ENCODE measurements at regions of chr17 and their contacts with region 1.

Region 1: DNA sequence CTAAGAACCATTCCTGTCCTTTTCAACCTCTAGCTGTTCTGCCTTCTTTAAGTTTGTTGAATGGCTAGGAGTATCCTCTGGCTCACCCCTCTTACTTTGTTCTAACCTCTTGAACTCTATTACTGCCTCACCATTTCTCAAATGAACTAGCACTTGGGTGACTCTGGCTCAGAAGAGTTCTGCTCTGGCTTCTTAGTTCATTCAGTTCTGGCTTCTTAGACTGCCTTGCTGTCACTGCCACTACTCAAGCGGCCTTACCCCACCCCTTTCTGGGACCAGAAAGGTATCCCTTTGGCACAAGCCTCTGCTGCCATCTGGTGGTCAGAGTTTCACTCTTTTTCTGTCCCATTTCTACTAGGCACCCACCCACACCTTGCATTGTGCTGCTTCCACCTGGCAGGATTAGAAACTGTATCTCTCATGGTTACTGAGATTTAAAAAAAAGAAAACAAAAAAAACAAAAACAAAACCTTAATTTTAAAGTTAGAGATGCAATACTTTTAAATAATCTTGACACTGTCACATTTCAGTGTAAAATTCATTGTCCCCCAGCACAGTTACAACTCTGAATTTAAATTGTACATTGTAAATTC is 6.8 kb upstream of the ABCA10 start:
- DNase-seq: peak; percentile 21 to 71 (median 57)
- ATAC-seq: peak; percentile 72
- H3K4me3 ChIP-seq: no peak overlapping the region
- H3K4me3 Mint-ChIP-seq: no peak overlapping the region
- H3K27ac ChIP-seq: no peak overlapping the region
- H3K27ac Mint-ChIP-seq: no peak overlapping the region
- H3K4me1 ChIP-seq: no peaks in the 10 kb centered on the region
- H3K4me1 Mint-ChIP-seq: no peaks in the 10 kb centered on the region
- H3K27me3 ChIP-seq: no peaks in the 10 kb centered on the region
- H3K27me3 Mint-ChIP-seq: no peaks in the 10 kb centered on the region
- CTCF ChIP-seq: peak; percentile 49

Region 2: DNA sequence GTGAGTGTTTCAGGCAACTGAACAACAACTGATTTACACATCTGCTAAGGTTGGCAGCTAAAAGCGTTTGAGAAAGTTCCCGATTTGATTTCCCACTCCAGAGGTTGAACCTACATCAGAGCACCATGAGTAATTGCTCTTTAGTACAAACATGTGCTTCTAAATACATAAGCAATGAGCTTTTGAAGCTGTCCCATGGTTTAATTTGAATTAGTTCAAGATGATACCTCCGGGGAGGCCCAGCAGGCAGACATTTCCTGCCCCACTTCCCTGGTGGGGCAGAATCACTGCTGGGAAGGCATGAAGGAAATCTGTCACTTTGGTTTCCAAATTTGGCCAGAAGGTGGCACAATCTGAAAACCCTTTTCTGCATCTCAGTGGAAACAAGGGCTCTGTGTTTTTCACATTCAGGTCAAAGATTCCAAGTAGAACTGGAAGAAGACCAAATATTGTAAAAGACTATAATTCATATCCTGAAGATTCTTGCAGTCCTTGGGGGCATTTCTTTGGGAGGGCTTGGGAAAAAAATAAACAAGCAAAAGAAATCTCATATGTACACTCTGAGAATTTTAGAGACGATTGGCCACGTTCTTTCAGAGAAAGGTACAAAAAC is 458.1 kb before region 1 on chr17:
- CTCF ChIA-PET with region 1: interaction called, 5 read pairs
- POLR2A ChIA-PET with region 1: no interaction called
- intact Hi-C with region 1: loop called (anchors 1 kb)
- DNase-seq: peak in 4 of 9 experiments; percentile 13 to 53 (median 28)
- ATAC-seq: no peak
- H3K4me3 ChIP-seq: no peak overlapping the region
- H3K4me3 Mint-ChIP-seq: no peak overlapping the region
- H3K27ac ChIP-seq: no peak overlapping the region
- H3K27ac Mint-ChIP-seq: no peak overlapping the region
- H3K4me1 ChIP-seq: no peaks in the 10 kb centered on the region
- H3K4me1 Mint-ChIP-seq: no peaks in the 10 kb centered on the region
- H3K27me3 ChIP-seq: no peaks in the 10 kb centered on the region
- H3K27me3 Mint-ChIP-seq: peaks cover 2% of the 10 kb centered on the region
- CTCF ChIP-seq: peak; percentile 62

Region 3: GRCh38 chr17:68993112-68993511 is 242.3 kb before region 1 on chr17:
- CTCF ChIA-PET with region 1: no interaction called
- POLR2A ChIA-PET with region 1: no interaction called
- intact Hi-C with region 1: no loop called
- DNase-seq: no peak
- ATAC-seq: no peak
- H3K4me3 ChIP-seq: no peak overlapping the region
- H3K4me3 Mint-ChIP-seq: no peak overlapping the region
- H3K27ac ChIP-seq: no peak overlapping the region
- H3K27ac Mint-ChIP-seq: no peak overlapping the region
- H3K4me1 ChIP-seq: no peaks in the 10 kb centered on the region
- H3K4me1 Mint-ChIP-seq: no peaks in the 10 kb centered on the region
- H3K27me3 ChIP-seq: no peaks in the 10 kb centered on the region
- H3K27me3 Mint-ChIP-seq: no peaks in the 10 kb centered on the region
- CTCF ChIP-seq: no peak

Measured in CD8-positive, alpha-beta T cell (primary cell).